ENCODE measurements at regions of chr16 and their contacts with region 1.

Region 1: DNA sequence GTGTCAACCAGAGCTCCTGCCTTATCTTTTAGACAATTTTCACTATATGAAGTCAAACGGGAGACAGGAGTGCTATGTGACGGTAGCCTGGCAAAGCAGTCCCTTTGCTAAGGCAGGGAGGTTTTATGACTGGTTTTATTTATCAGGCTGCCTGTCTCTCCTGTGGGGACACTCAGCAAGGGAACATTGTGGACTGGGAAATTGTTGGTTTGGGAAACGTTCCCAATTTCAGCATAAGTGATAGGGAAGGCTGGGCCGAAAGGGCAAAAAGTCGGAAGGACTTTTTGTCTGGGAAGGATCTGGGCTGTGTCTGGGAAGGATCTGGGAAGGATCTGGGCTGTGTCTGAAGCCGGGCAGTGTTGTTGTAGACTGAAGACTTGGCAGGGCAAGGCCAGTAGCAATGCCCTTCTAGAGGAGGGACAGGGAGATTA is 211.2 kb downstream of the PARN start:
- DNase-seq: no peak
- ATAC-seq: peak; percentile 78
- H3K4me3 ChIP-seq: no peak overlapping the region
- H3K27ac ChIP-seq: peak overlapping the region; percentile 23 to 93
- H3K4me1 ChIP-seq: peaks cover 4 to 7% of the 10 kb centered on the region in 2 donors
- H3K27me3 ChIP-seq: no peaks in the 10 kb centered on the region

Region 2: GRCh38 chr16:14475370-14476139 is 56.7 kb after region 1 on chr16:
- intact Hi-C with region 1: loop called in 1 of 2 experiments (anchors 10 kb)
- DNase-seq: no peak
- ATAC-seq: no peak
- H3K4me3 ChIP-seq: no peak overlapping the region
- H3K27ac ChIP-seq: no peak overlapping the region
- H3K4me1 ChIP-seq: peaks cover 0 to 2% of the 10 kb centered on the region in 2 donors
- H3K27me3 ChIP-seq: no peaks in the 10 kb centered on the region